Gastrocnemius medialis (tissue), 4 donors: ENCODE measurements at regions of chr1 and their contacts with region 1.

Region 1: GRCh38 chr1:19485362-19486187 is at the start of gene CAPZB:
- DNase-seq: peak; percentile 92 to 93
- ATAC-seq: peak; percentile 85 to 88
- H3K4me3 ChIP-seq: peak within 1 kb of the TSS; percentile 83 to 98 (median 90)
- H3K27ac ChIP-seq: peak within 1 kb of the TSS; percentile 87 to 99 (median 97)
- H3K4me1 ChIP-seq: peaks cover 52 to 56% of the 10 kb centered on the region in 2 donors
- H3K27me3 ChIP-seq: no peaks in the 10 kb centered on the region
- CTCF ChIP-seq: no peak
- POLR2A ChIP-seq: peak; percentile 79 to 84
- total RNA-seq, gene CAPZB: 48.6 to 93.8 (median 74.9) TPM

Region 2: DNA sequence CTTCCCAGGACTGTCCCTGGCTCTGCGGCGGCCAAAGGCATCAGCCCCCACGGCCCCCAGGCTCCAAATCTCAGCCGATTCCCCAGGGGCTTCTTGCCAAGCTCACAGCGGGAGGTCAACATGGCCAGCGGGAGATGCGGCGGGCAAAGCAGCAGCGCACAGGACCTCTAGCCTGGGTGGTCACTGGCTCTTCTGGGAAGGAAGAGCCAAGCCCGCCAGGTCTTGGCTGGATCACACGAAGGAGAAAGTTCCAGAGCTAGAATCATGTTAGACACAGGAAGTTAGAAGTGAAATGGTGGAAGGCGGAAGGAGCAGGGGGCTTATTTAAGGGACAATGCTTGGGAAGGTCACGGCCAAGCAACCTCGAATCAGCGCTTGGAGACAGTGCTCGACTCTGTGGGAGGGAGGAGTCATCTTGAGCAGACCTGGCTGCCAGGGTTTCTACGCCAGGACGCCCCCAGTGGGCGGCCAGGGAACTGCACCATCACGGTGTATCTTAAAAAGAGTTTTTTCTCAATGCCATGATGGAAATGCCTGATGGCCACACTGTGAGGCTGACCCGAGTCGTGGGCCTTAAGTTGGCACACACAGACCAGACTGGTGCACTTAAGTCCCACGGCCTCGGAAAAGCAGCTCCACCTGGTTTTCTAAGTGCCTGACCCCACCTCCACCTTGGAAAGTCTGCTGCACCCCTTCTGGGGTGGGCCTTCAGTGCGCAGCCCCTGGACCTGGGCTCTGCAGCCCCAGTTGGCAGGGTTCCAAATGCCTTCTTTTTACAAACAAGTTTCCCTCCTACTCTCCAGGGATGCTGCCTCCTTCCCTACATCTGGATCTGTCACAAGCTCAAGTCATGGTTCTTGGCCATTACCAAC is 144.1 kb before region 1 on chr1:
- in situ Hi-C with region 1: no loop called
- intact Hi-C with region 1: loop called (anchors 5 kb)
- DNase-seq: peak in 1 of 2 donors; percentile 68
- ATAC-seq: peak; percentile 35 to 68
- H3K4me3 ChIP-seq: no peak overlapping the region
- H3K27ac ChIP-seq: peak overlapping the region in 2 of 4 donors; percentile 30 to 33
- H3K4me1 ChIP-seq: no peaks in the 10 kb centered on the region
- H3K27me3 ChIP-seq: no peaks in the 10 kb centered on the region
- CTCF ChIP-seq: peak; percentile 67 to 88 (median 78)
- POLR2A ChIP-seq: no peak

Region 3: GRCh38 chr1:19390901-19391595 is 94.5 kb before region 1 on chr1:
- in situ Hi-C with region 1: loop called in 2 of 4 experiments (anchors 10 to 25 kb)
- intact Hi-C with region 1: no loop called
- DNase-seq: peak in 1 of 2 donors; percentile 31
- ATAC-seq: peak; percentile 33 to 50
- H3K4me3 ChIP-seq: no peak overlapping the region
- H3K27ac ChIP-seq: peak overlapping the region; percentile 38 to 71 (median 52)
- H3K4me1 ChIP-seq: peaks cover 22 to 24% of the 10 kb centered on the region in 2 donors
- H3K27me3 ChIP-seq: no peaks in the 10 kb centered on the region
- CTCF ChIP-seq: peak; percentile 70 to 83 (median 75)
- POLR2A ChIP-seq: no peak

Region 4: GRCh38 chr1:19439464-19440171 is 46.0 kb before region 1 on chr1:
- in situ Hi-C with region 1: no loop called
- intact Hi-C with region 1: loop called (anchors 2 kb)
- DNase-seq: peak; percentile 87 to 90
- ATAC-seq: peak; percentile 43 to 63
- H3K4me3 ChIP-seq: no peak overlapping the region
- H3K27ac ChIP-seq: peak overlapping the region; percentile 80 to 89 (median 84)
- H3K4me1 ChIP-seq: peaks cover 83 to 90% of the 10 kb centered on the region in 2 donors
- H3K27me3 ChIP-seq: no peaks in the 10 kb centered on the region
- CTCF ChIP-seq: peak in 1 of 5 experiments; percentile 14
- POLR2A ChIP-seq: no peak

Region 5: GRCh38 chr1:19651141-19651737 is 165.7 kb after region 1 on chr1:
- in situ Hi-C with region 1: loop called in 1 of 4 experiments (anchors 10 kb)
- intact Hi-C with region 1: loop called (anchors 5 kb)
- DNase-seq: peak in 1 of 2 donors; percentile 45
- ATAC-seq: peak; percentile 53 to 67
- H3K4me3 ChIP-seq: peak overlapping the region in 1 of 4 donors; percentile 2
- H3K27ac ChIP-seq: peak overlapping the region; percentile 61 to 79 (median 74)
- H3K4me1 ChIP-seq: peaks cover 5 to 26% of the 10 kb centered on the region in 2 donors
- H3K27me3 ChIP-seq: no peaks in the 10 kb centered on the region
- CTCF ChIP-seq: peak; percentile 64 to 80 (median 71)
- POLR2A ChIP-seq: no peak